ENCODE measurements at regions of chr12 and their contacts with region 1.

Region 1: DNA sequence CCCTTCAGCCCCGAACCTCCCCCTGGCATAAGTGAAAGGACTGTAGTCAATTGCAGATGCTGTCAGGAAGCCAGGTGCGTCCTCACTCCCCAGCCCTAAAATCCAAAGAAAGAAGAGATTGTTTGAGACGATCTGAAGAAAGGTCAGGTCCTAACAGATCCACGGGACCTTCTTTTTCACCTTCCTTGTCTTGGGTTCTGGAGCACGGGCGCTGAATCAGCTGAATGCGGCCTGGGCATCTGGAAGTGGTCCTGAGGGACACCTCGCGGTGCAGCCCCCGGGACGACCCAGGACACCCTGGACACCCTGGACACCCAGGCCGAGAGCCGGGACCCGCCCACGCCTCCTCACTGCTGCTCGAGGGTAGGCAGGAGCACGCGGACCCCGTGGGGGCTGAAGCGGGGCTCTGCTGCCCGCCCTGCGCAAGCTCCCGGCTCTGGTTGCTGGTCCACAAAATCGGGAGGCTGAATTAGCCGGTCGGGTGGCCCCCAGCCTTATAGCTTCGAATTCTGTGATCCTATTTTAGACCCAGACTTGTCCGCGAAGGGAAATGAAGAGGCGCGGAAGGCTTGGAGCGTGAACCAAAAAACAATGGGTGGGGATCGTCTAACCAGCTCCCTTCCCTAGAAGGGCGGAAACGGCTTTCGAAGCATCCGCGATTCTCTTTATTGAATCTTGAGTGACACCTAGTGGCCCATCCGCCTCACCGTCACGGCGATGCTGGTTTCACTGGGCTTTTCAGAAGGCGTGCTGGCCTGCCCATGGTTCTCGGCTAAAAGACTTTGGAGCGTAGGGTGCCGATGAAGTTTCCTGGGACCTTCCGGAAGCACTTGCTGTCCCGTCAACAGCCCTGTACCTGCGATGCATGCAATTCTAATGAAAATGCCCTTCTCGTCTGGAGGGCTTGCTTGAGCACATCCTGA is 46.4 kb upstream of the PLXNC1 start:
- DNase-seq: peak; percentile 85
- CTCF ChIP-seq: peak; percentile 87

Region 2: GRCh38 chr12:93502802-93503623 is 599.0 kb before region 1 on chr12:
- in situ Hi-C with region 1: loop called (anchors 25 kb)
- DNase-seq: no peak
- CTCF ChIP-seq: peak; percentile 67

Region 3: GRCh38 chr12:94186278-94187241 is 84.6 kb after region 1 on chr12:
- in situ Hi-C with region 1: no loop called
- DNase-seq: no peak
- CTCF ChIP-seq: no peak